A549 (cell line): ENCODE measurements at regions of chr1 and their contacts with region 1.

Region 1: DNA sequence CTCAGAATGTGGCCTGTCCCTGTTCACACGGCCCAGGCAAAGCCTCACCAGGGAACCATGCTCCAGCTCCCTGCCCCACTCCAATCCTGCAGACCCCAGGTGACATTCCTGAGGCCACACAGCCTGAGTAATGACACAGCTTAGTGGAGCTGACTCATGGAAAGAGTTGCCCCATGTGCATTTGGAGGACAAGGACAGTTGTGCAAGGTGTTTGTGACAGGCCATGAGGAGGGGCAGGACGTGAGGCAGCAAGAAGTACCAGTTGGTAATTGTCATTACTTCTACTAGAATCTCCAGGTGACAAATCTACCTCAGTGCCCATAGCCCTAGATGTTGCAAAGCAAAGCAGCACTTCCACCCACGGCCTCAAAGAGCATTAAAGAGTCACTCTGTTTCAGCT is 15.2 kb downstream of the PRR9 start:
- DNase-seq: no peak
- ATAC-seq: no peak
- H3K4me3 ChIP-seq: no peak overlapping the region
- H3K27ac ChIP-seq: no peak overlapping the region
- H3K4me1 ChIP-seq: no peaks in the 10 kb centered on the region
- CTCF ChIP-seq: no peak
- EP300 ChIP-seq: no peak
- POLR2A ChIP-seq: no peak
- RAD21 ChIP-seq: no peak

Region 2: DNA sequence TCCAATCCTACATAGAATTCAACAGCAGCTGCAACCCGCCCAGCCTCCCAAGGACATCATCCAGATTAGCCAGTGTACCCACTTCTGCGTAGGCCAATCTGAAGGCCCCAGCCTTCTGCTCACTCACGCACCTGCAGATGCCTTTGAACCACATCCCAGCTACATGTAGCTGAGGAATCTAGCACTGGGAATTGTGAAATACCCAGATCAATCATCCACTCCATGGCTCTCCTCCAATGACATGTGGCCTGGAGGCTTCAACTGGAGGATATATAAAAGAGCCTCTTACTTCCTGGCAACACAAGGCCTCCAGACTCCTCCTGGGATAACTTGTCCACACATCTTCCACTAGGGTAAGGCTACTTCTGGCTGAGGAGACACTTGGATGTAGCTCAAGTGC is 390.0 kb before region 1 on chr1 and contains the start of gene LCE6A:
- CTCF ChIA-PET with region 1: no interaction called
- POLR2A ChIA-PET with region 1: no interaction called
- DNase-seq: no peak
- ATAC-seq: no peak
- H3K4me3 ChIP-seq: no peak within 1 kb of the TSS
- H3K27ac ChIP-seq: no peak within 1 kb of the TSS
- H3K4me1 ChIP-seq: no peaks in the 10 kb centered on the region
- CTCF ChIP-seq: no peak
- EP300 ChIP-seq: no peak
- POLR2A ChIP-seq: no peak
- RAD21 ChIP-seq: no peak
- polyA plus RNA-seq, gene LCE6A: not detected in 2 replicates

Region 3: GRCh38 chr1:153220606-153221303 is 11.8 kb before region 1 on chr1:
- CTCF ChIA-PET with region 1: interaction called, 13 read pairs
- POLR2A ChIA-PET with region 1: no interaction called
- DNase-seq: no peak
- ATAC-seq: no peak
- H3K4me3 ChIP-seq: no peak overlapping the region
- H3K27ac ChIP-seq: no peak overlapping the region
- H3K4me1 ChIP-seq: no peaks in the 10 kb centered on the region
- CTCF ChIP-seq: no peak
- EP300 ChIP-seq: no peak
- POLR2A ChIP-seq: no peak
- RAD21 ChIP-seq: no peak

Region 4: GRCh38 chr1:153312570-153313193 is 80.1 kb after region 1 on chr1 and contains the start of gene PGLYRP3:
- CTCF ChIA-PET with region 1: no interaction called
- POLR2A ChIA-PET with region 1: no interaction called
- DNase-seq: peak in 1 of 2 experiments; percentile 9
- ATAC-seq: peak; percentile 56 to 65; a peak in 5 of 6 replicates
- H3K4me3 ChIP-seq: no peak within 1 kb of the TSS
- H3K27ac ChIP-seq: no peak within 1 kb of the TSS
- H3K4me1 ChIP-seq: no peaks in the 10 kb centered on the region
- CTCF ChIP-seq: no peak
- EP300 ChIP-seq: no peak
- POLR2A ChIP-seq: no peak
- RAD21 ChIP-seq: 0 out of 5 replicates have a peak, but pooled peaks of 1 of the 2 experiments have one; percentile 11
- polyA plus RNA-seq, gene PGLYRP3: not detected in 2 replicates